Esophagus muscularis mucosa (tissue), 4 donors: ENCODE measurements at regions of chr13 and their contacts with region 1.

Region 1: DNA sequence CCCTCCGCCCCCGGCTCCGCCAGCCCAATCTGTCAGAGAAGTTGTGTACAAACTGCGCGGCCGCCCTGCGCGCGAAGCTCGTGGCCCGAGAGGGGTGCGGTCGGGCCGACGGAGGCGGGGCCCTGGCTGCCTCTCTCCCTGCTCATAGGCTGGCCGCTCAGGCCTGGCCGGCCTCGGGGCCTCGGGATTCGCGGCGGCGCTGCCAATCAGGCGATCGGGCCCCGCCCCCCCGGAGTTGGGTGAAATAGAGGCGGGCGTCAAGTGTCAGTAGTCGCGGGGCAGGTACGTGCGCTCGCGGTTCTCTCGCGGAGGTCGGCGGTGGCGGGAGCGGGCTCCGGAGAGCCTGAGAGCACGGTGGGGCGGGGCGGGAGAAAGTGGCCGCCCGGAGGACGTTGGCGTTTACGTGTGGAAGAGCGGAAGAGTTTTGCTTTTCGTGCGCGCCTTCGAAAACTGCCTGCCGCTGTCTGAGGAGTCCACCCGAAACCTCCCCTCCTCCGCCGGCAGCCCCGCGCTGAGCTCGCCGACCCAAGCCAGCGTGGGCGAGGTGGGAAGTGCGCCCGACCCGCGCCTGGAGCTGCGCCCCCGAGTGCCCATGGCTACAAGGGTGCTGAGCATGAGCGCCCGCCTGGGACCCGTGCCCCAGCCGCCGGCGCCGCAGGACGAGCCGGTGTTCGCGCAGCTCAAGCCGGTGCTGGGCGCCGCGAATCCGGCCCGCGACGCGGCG is at the start of gene KLF5:
- DNase-seq: peak; percentile 98
- H3K4me3 ChIP-seq: peak within 1 kb of the TSS; percentile 82 to 92 (median 87)
- H3K27ac ChIP-seq: peak within 1 kb of the TSS; percentile 71 to 80 (median 78)
- H3K4me1 ChIP-seq: peaks cover 6 to 19% (median 18%) of the 10 kb centered on the region in 4 donors
- H3K27me3 ChIP-seq: peaks cover 0 to 3% (median 0%) of the 10 kb centered on the region in 4 donors
- CTCF ChIP-seq: no peak
- EP300 ChIP-seq: no peak
- POLR2A ChIP-seq: peak; percentile 85
- total RNA-seq, gene KLF5: 2.3 to 8.3 (median 4.7) TPM

Region 2: GRCh38 chr13:73286976-73287674 is 228.2 kb after region 1 on chr13:
- intact Hi-C with region 1: loop called (anchors 10 kb)
- DNase-seq: no peak
- H3K4me3 ChIP-seq: no peak overlapping the region
- H3K27ac ChIP-seq: no peak overlapping the region
- H3K4me1 ChIP-seq: no peaks in the 10 kb centered on the region
- H3K27me3 ChIP-seq: no peaks in the 10 kb centered on the region
- CTCF ChIP-seq: no peak
- EP300 ChIP-seq: no peak
- POLR2A ChIP-seq: no peak

Region 3: GRCh38 chr13:73428137-73428536 is 369.2 kb after region 1 on chr13:
- intact Hi-C with region 1: loop called (anchors 10 kb)
- DNase-seq: no peak
- H3K4me3 ChIP-seq: no peak overlapping the region
- H3K27ac ChIP-seq: no peak overlapping the region
- H3K4me1 ChIP-seq: peaks cover 0 to 24% (median 4%) of the 10 kb centered on the region in 4 donors
- H3K27me3 ChIP-seq: no peaks in the 10 kb centered on the region
- CTCF ChIP-seq: no peak
- EP300 ChIP-seq: no peak
- POLR2A ChIP-seq: no peak

Region 4: GRCh38 chr13:73708393-73708985 is 649.6 kb after region 1 on chr13:
- intact Hi-C with region 1: loop called (anchors 10 kb)
- DNase-seq: no peak
- H3K4me3 ChIP-seq: no peak overlapping the region
- H3K27ac ChIP-seq: no peak overlapping the region
- H3K4me1 ChIP-seq: no peaks in the 10 kb centered on the region
- H3K27me3 ChIP-seq: no peaks in the 10 kb centered on the region
- CTCF ChIP-seq: peak; percentile 40 to 66 (median 55)
- EP300 ChIP-seq: no peak
- POLR2A ChIP-seq: no peak